ENCODE measurements at regions of chr6 and their contacts with region 1.

Region 1: GRCh38 chr6:34154668-34155447 is 9.0 kb upstream of the GRM4 start:
- DNase-seq: no peak
- ATAC-seq: peak in 1 of 2 donors; percentile 64
- H3K4me3 ChIP-seq: peak overlapping the region in 2 of 4 donors; percentile 21 to 28
- H3K27ac ChIP-seq: no peak overlapping the region
- H3K4me1 ChIP-seq: peaks cover 0 to 7% of the 10 kb centered on the region in 2 donors
- H3K27me3 ChIP-seq: peaks cover 14 to 28% (median 20%) of the 10 kb centered on the region in 3 donors
- CTCF ChIP-seq: peak; percentile 86 to 97 (median 90)
- POLR2A ChIP-seq: no peak

Region 2: DNA sequence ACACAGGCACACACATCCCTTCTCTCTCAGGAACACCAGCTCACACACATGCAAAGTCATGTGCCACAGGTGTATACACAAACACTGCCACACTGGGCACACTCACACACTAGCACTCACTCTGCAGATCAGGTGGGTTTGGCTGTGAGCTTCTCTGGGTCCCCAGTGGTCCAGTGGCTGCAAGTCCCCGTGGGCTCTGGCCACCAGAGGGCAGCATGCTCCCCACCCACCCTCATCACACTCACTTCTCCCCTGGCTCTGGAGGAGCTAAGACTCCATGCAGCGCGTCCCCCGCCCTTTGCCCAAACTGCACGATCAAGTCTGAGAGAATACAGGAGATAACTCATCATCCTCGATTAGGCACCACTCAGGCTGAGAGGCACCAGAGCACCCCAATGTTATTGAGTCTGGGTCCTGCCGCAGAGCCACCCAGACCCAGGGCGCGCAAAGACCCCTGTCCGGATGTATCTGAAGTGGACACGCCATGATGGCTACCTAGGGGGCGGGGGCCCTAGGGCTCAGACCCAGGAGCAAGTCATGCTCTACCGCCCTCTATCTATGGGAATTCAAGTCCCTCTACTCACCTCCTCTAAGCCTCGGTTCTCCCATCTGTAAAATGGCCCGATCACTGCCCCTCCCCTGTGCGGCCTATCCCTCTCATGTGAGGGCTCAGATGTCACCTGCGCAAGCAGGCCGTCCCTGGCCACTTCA is 99.5 kb before region 1 on chr6:
- in situ Hi-C with region 1: loop called in 3 of 4 experiments (anchors 5 to 10 kb)
- intact Hi-C with region 1: loop called (anchors 1 kb)
- DNase-seq: peak in 1 of 2 donors; percentile 36
- ATAC-seq: peak in 1 of 2 donors; percentile 81
- H3K4me3 ChIP-seq: no peak overlapping the region
- H3K27ac ChIP-seq: no peak overlapping the region
- H3K4me1 ChIP-seq: no peaks in the 10 kb centered on the region
- H3K27me3 ChIP-seq: peaks cover 0 to 2% (median 0%) of the 10 kb centered on the region in 3 donors
- CTCF ChIP-seq: peak; percentile 36 to 80 (median 67)
- POLR2A ChIP-seq: no peak

Region 3: GRCh38 chr6:34362909-34363680 is 208.2 kb after region 1 on chr6:
- in situ Hi-C with region 1: no loop called
- intact Hi-C with region 1: no loop called
- DNase-seq: peak; percentile 19 to 44
- ATAC-seq: peak; percentile 95 to 98
- H3K4me3 ChIP-seq: peak overlapping the region in 3 of 4 donors; percentile 13 to 38 (median 27)
- H3K27ac ChIP-seq: peak overlapping the region; percentile 85 to 94 (median 89)
- H3K4me1 ChIP-seq: peaks cover 56 to 61% of the 10 kb centered on the region in 2 donors
- H3K27me3 ChIP-seq: no peaks in the 10 kb centered on the region
- CTCF ChIP-seq: no peak
- POLR2A ChIP-seq: no peak